ENCODE measurements at regions of chr4 and their contacts with region 1.

Region 1: DNA sequence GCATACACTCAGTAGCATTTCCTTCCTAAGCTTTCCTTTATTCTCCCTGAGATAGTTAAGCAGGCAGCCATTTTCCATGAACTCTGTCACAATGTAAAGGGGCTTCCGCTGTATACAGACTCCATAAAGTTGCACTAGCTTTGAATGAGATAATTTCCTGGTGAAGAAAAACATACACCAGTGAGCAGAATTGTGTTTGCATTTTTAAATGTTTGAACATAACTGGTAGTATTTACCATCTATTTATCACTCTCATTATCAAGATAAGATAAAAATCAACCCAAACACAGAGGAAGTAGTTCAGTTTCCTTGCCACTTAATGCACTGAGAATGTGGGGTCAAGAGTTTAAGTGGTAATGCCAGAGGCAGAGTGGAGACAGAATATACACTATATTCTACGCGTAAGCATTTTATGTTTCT is 54.1 kb downstream of the TXK start:
- DNase-seq: no peak
- ATAC-seq: no peak
- H3K4me3 ChIP-seq: no peak overlapping the region
- H3K4me3 Mint-ChIP-seq: no peak overlapping the region
- H3K27ac ChIP-seq: no peak overlapping the region
- H3K27ac Mint-ChIP-seq: no peak overlapping the region
- H3K4me1 ChIP-seq: no peaks in the 10 kb centered on the region
- H3K4me1 Mint-ChIP-seq: peaks cover 49% of the 10 kb centered on the region
- H3K27me3 ChIP-seq: no peaks in the 10 kb centered on the region
- H3K27me3 Mint-ChIP-seq: no peaks in the 10 kb centered on the region
- CTCF ChIP-seq: no peak

Region 2: DNA sequence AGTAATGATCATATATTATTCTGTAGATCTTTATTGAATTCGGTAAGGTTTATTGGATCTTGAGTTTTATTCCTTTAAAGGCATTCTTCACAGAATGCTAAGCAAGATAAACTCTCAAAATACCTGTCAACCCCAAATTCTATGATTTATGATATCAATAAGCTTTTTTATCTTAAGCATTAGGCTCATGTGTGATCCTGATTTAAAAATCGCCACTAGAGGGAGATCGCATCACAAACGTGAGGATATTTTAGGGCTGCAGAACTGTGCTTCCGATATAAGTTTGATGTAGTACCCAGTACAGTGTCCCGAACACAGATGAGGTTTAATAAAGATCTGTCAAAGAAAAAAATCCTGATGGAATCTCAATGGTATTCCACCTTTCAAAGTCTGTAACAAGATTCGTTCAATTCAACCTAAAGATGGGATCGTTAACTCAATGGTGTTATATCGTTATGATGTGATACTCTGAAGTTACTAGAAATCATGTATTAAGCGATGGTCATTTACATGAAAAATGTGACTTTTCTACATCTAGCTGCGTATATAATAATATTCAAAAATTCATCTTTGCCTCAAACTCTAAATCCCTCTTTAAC is 411.1 kb before region 1 on chr4:
- CTCF ChIA-PET with region 1: no interaction called
- POLR2A ChIA-PET with region 1: no interaction called
- intact Hi-C with region 1: loop called in 1 of 2 experiments (anchors 10 kb)
- DNase-seq: peak in 4 of 14 experiments; percentile 19 to 67 (median 53)
- ATAC-seq: peak; percentile 32
- H3K4me3 ChIP-seq: no peak overlapping the region
- H3K4me3 Mint-ChIP-seq: no peak overlapping the region
- H3K27ac ChIP-seq: no peak overlapping the region
- H3K27ac Mint-ChIP-seq: no peak overlapping the region
- H3K4me1 ChIP-seq: no peaks in the 10 kb centered on the region
- H3K4me1 Mint-ChIP-seq: no peaks in the 10 kb centered on the region
- H3K27me3 ChIP-seq: peaks cover 4 to 5% of the 10 kb centered on the region in 2 experiments
- H3K27me3 Mint-ChIP-seq: peaks cover 26% of the 10 kb centered on the region
- CTCF ChIP-seq: peak; percentile 75

Region 3: DNA sequence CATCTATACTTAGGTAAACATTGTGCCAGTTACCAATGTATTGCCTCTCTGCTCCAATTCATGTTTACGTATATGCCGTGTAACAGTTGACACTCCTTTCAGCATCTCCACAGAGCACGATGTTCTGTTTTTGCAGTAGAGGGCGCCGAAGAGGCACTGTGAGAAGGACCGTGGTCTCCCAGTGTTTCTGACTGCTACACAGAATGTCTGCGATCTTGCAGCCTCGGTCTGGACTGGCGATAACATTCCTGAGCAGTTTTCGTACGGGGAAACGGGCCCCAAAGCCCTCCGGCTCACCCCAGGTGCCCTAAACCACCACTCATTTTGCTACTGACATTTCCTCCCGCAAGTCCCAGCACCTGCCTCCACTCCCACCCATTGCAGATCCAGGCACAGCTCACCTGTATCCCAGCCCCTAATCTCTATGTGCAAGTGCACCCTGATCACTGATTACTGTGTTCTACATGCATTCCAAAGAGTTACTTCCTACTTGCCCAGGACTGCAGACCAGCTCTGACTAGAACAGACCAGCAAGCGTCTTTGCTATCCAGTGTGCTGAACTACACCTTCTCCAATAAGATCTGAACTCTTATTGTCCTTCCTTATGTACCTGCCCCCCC is 153.2 kb before region 1 on chr4:
- CTCF ChIA-PET with region 1: no interaction called
- POLR2A ChIA-PET with region 1: no interaction called
- intact Hi-C with region 1: loop called (anchors 5 kb)
- DNase-seq: peak; percentile 22 to 72 (median 34)
- ATAC-seq: peak; percentile 98
- H3K4me3 ChIP-seq: no peak overlapping the region
- H3K4me3 Mint-ChIP-seq: peak overlapping the region; percentile 8
- H3K27ac ChIP-seq: no peak overlapping the region
- H3K27ac Mint-ChIP-seq: no peak overlapping the region
- H3K4me1 ChIP-seq: peaks cover 5% of the 10 kb centered on the region
- H3K4me1 Mint-ChIP-seq: peaks cover 13% of the 10 kb centered on the region
- H3K27me3 ChIP-seq: no peaks in the 10 kb centered on the region
- H3K27me3 Mint-ChIP-seq: peaks cover 34% of the 10 kb centered on the region
- CTCF ChIP-seq: peak; percentile 82

Region 4: GRCh38 chr4:48153791-48154550 is 74.0 kb after region 1 on chr4:
- CTCF ChIA-PET with region 1: no interaction called
- POLR2A ChIA-PET with region 1: no interaction called
- intact Hi-C with region 1: no loop called
- DNase-seq: no peak
- ATAC-seq: no peak
- H3K4me3 ChIP-seq: no peak overlapping the region
- H3K4me3 Mint-ChIP-seq: no peak overlapping the region
- H3K27ac ChIP-seq: no peak overlapping the region
- H3K27ac Mint-ChIP-seq: no peak overlapping the region
- H3K4me1 ChIP-seq: no peaks in the 10 kb centered on the region
- H3K4me1 Mint-ChIP-seq: no peaks in the 10 kb centered on the region
- H3K27me3 ChIP-seq: no peaks in the 10 kb centered on the region
- H3K27me3 Mint-ChIP-seq: no peaks in the 10 kb centered on the region
- CTCF ChIP-seq: no peak

Measured in CD4-positive, alpha-beta T cell (primary cell).